ENCODE measurements at regions of chr2 and their contacts with region 1.

Region 1: DNA sequence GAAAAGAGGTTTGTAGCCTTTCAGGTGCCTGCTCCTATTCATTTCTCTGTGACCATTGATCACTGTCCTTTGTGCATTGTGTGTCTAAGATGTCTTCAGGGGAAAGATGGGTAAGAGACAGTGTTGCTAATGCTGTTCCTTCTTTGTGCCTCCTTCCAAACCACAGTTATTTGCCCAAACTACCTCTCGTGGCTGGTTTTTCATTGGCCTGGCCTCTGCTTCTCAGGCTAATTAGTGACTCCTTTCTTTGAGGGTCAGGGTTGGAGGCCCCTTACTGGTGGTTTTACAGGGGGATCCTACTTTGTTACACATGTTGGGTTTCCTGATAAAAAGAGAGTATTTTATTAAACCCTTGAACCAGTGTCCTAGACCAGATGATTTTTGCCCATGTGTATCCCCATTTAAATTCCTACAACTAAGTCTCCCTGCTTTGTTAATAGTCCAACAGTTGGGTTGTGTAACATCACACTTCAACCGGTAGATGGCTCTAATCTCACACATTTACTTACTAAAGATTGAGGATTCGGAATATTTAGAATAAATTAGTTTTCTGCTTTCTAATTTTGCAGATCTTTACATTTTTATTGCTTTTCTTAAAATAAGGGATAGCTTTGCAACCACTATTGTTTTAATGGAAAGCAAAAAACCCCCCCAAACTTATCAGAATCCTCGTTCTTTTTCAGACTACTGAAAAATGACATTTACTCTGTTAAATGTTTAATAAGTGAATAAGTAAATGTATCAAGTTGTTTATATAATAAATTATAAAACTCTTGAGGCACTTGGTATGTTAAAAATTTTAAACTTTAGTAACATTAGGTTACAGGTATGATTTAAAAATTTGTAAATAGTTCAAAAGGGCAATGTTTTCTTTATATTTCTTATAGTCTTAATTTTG is 2.4 kb downstream of the MARS2 start:
- DNase-seq: peak; percentile 13
- H3K4me3 ChIP-seq: peak overlapping the region; percentile 88
- H3K27ac ChIP-seq: no peak overlapping the region
- H3K27me3 ChIP-seq: no peaks in the 10 kb centered on the region
- CTCF ChIP-seq: peak; percentile 72

Region 2: GRCh38 chr2:197198890-197199289 is 508.7 kb before region 1 on chr2:
- CTCF ChIA-PET with region 1: no interaction called
- POLR2A ChIA-PET with region 1: no interaction called
- DNase-seq: no peak
- H3K4me3 ChIP-seq: no peak overlapping the region
- H3K27ac ChIP-seq: no peak overlapping the region
- H3K27me3 ChIP-seq: no peaks in the 10 kb centered on the region
- CTCF ChIP-seq: no peak

Region 3: GRCh38 chr2:197506658-197507057 is 200.9 kb before region 1 on chr2:
- CTCF ChIA-PET with region 1: no interaction called
- POLR2A ChIA-PET with region 1: no interaction called
- DNase-seq: no peak
- H3K4me3 ChIP-seq: no peak overlapping the region
- H3K27ac ChIP-seq: no peak overlapping the region
- H3K27me3 ChIP-seq: no peaks in the 10 kb centered on the region
- CTCF ChIP-seq: no peak

Region 4: DNA sequence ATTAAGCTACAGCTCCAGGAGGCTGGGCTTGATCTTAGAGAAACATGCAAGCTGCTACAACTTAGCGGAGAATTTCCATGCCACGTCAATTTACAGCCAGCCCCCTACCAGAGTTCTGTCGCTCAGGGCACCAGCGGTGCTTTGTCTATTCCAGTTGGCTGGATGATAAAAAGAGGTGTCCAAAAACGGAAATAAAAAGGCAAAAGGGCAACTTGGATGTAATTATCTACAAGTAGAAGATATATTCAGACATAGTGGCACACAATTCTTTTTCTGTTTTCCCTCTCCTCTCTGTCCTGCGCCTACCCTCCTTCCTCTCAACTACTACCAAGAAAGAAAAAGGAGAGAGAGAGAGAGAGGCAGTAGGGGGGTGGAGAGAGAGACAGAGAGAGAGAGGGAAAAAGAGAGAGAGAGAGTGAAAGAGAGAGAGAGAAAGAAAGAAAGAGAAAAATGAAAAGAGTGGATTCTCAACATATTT is 31.8 kb before region 1 on chr2:
- CTCF ChIA-PET with region 1: interaction called, 17 read pairs
- POLR2A ChIA-PET with region 1: interaction called, 4 read pairs
- DNase-seq: peak; percentile 16
- H3K4me3 ChIP-seq: peak overlapping the region; percentile 62
- H3K27ac ChIP-seq: peak overlapping the region; percentile 81
- H3K27me3 ChIP-seq: no peaks in the 10 kb centered on the region
- CTCF ChIP-seq: no peak

Region 5: DNA sequence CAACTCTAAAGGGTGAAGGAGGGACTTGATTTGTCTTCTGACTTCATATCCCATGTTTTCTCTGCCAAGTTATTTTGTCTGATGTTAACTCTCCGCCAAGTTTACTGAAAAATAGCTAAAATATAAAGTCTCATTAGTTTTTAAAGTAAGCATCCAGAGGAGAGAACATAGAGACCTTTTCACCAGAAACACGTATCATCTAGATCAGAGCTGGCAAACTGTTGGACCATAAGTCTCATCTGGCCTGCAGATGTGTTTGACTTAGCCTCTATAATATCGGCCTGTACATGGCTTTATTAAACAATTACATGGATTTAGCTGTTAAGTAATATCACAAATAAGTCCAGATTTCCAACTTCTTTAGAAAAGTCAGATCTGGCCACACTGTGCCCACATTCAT is 279.4 kb after region 1 on chr2:
- CTCF ChIA-PET with region 1: no interaction called
- POLR2A ChIA-PET with region 1: no interaction called
- DNase-seq: no peak
- H3K4me3 ChIP-seq: no peak overlapping the region
- H3K27ac ChIP-seq: no peak overlapping the region
- H3K27me3 ChIP-seq: no peaks in the 10 kb centered on the region
- CTCF ChIP-seq: no peak